AG04450 (cell line): ENCODE measurements at regions of chr20 and their contacts with region 1.

Region 1: GRCh38 chr20:34015401-34016335 is 22.0 kb downstream of the RALY start:
- DNase-seq: no peak
- H3K4me3 ChIP-seq: no peak overlapping the region
- H3K27ac ChIP-seq: no peak overlapping the region
- H3K27me3 ChIP-seq: no peaks in the 10 kb centered on the region
- CTCF ChIP-seq: no peak

Region 2: DNA sequence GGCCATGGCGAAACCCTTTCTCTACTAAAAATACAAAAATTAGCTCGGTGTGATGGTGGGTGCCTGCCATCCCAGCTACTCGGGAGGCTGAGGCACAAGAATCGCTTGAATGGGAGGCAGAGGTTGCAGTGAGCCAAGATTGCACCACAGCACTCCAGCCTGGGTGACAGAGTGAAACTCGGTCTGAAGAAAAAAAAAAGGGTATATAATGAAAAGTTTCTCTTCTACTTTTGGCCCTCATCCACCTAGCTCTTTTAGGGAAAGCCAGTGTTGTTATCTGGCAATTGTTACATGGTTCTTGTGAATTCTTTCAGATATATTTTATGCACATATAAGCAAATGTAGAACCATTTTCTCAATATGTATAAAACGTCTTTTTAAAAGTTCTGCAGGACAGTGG is 1719.3 kb before region 1 on chr20:
- CTCF ChIA-PET with region 1: interaction called, 11 read pairs
- POLR2A ChIA-PET with region 1: no interaction called
- DNase-seq: no peak
- H3K4me3 ChIP-seq: no peak overlapping the region
- H3K27ac ChIP-seq: no peak overlapping the region
- H3K27me3 ChIP-seq: no peaks in the 10 kb centered on the region
- CTCF ChIP-seq: no peak

Region 3: GRCh38 chr20:34452281-34452982 is 436.8 kb after region 1 on chr20:
- CTCF ChIA-PET with region 1: no interaction called
- POLR2A ChIA-PET with region 1: no interaction called
- DNase-seq: no peak
- H3K4me3 ChIP-seq: no peak overlapping the region
- H3K27ac ChIP-seq: no peak overlapping the region
- H3K27me3 ChIP-seq: no peaks in the 10 kb centered on the region
- CTCF ChIP-seq: no peak